Endothelial cell of umbilical vein (primary cell): ENCODE measurements at regions of chr17 and their contacts with region 1.

Region 1: DNA sequence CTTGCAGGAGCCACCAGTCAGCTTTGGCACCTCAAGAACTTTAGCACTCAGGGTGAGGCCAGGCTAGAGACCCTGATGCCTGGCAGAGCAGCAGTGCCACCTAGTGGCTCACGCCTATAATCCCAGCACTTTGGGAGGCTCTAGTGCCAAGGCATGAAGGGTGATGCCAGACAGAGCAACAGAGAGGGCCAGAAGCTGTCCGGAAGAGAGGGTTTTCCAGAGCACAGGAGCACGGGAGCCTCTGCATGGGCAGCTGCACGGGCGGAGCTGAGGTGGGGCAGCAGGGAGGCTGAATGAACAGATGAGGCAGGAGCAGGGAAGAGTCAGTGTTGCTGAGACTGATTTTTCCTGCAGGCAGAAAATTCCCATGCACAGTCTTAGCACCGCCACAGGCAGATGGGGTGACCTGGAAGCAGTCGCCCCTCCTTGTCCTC is 38.9 kb downstream of the MYH3 start:
- DNase-seq: peak; percentile 46
- H3K4me3 ChIP-seq: no peak overlapping the region
- H3K27ac ChIP-seq: no peak overlapping the region
- H3K4me1 ChIP-seq: no peaks in the 10 kb centered on the region
- H3K27me3 ChIP-seq: no peaks in the 10 kb centered on the region
- CTCF ChIP-seq: peak; percentile 90 to 93
- POLR2A ChIP-seq: no peak

Region 2: DNA sequence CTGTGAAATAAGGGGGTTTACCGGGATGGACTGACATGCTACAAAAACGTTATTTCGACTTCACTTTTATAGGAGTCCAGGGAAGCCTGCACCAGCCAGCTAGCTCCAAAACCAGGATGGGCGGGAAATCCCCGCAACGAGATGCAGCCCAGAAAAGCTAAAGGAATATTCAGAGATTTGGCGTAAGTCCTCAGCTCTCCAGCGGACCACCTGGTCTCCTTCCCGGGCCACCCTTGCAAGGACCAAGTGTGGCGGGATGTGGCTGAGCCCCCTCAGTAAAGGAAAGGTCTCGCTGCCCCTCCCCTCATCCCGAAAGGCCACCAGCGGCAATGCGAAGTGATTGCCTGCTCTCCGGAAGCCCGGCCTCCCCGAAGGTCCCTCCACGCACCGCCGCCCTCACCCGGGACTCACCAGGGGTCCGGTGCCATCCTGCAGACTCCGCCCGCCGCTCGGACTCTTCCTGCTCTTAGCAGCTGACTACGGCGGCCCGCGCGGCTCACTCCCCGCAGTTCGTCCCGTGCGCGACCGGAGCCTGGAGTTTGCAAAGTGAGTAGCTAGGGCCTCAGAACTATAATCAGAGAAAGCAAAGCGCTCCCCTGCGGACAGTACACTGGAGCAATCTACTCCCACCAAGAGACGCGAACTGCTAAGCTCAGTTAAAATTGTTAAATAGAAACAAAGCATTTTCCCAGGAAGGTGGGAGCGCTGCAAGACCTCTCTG is 1042.7 kb before region 1 on chr17 and contains the start of gene STX8:
- CTCF ChIA-PET with region 1: interaction called, 64 read pairs
- POLR2A ChIA-PET with region 1: no interaction called
- dilution Hi-C with region 1: no loop called
- intact Hi-C with region 1: no loop called
- DNase-seq: peak; percentile 90
- H3K4me3 ChIP-seq: peak within 1 kb of the TSS; percentile 59 to 89 (median 76)
- H3K27ac ChIP-seq: peak within 1 kb of the TSS; percentile 8
- H3K4me1 ChIP-seq: peaks cover 19% of the 10 kb centered on the region
- H3K27me3 ChIP-seq: no peaks in the 10 kb centered on the region
- CTCF ChIP-seq: no peak
- POLR2A ChIP-seq: no peak
- total RNA-seq, gene STX8: 67.3 and 68.0 TPM in 2 replicates

Region 3: DNA sequence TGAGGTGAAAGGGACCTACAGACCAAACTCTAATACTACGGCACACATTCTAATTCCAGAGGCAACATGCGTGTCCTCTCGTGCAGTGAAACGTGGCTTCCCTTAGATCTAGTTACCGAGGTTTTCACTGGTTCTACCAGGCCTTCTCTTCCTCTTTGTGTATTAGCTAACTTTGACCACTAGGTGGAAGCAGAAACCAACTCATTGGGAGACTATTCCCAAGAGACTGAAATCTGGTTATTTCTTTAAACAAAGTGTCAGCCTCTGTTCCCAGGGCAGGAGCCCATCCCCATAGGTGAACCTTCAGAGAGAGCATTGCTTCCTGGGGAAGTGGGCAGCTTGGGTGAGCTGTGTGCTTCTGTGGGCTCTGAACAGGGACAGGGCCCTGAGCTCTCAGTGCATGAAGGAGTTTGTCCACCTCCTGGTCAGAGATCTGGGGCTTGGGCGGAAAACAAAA is 693.5 kb before region 1 on chr17:
- CTCF ChIA-PET with region 1: interaction called, 108 read pairs
- POLR2A ChIA-PET with region 1: no interaction called
- dilution Hi-C with region 1: no loop called
- intact Hi-C with region 1: loop called (anchors 1 kb)
- DNase-seq: peak; percentile 39
- H3K4me3 ChIP-seq: no peak overlapping the region
- H3K27ac ChIP-seq: no peak overlapping the region
- H3K4me1 ChIP-seq: no peaks in the 10 kb centered on the region
- H3K27me3 ChIP-seq: no peaks in the 10 kb centered on the region
- CTCF ChIP-seq: peak; percentile 57 to 66
- POLR2A ChIP-seq: no peak

Region 4: GRCh38 chr17:10327640-10328039 is 290.6 kb before region 1 on chr17:
- CTCF ChIA-PET with region 1: interaction called, 27 read pairs
- POLR2A ChIA-PET with region 1: no interaction called
- dilution Hi-C with region 1: no loop called
- intact Hi-C with region 1: loop called (anchors 1 kb)
- DNase-seq: peak; percentile 37
- H3K4me3 ChIP-seq: no peak overlapping the region
- H3K27ac ChIP-seq: no peak overlapping the region
- H3K4me1 ChIP-seq: no peaks in the 10 kb centered on the region
- H3K27me3 ChIP-seq: no peaks in the 10 kb centered on the region
- CTCF ChIP-seq: peak; percentile 75 to 82
- POLR2A ChIP-seq: no peak

Region 5: DNA sequence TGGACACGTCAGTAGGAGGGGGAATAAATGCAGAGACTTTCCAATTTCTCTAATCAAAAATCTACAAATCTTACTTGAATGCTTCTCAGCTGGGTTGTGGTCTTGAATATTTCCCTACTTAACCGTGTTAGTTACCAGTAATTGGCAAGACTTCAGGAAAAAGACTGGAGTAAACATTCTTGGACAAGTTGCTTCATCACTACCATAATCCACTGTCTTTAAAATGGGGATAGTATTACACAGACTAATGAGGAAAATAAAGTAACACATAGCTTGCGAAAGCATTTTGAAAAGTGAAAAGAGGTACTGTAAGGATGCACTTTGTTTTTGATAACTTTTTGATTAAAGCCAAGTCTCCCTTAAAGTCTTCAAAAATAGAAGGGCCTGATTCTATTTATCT is 118.3 kb before region 1 on chr17:
- CTCF ChIA-PET with region 1: no interaction called
- POLR2A ChIA-PET with region 1: no interaction called
- dilution Hi-C with region 1: no loop called
- intact Hi-C with region 1: no loop called
- DNase-seq: no peak
- H3K4me3 ChIP-seq: no peak overlapping the region
- H3K27ac ChIP-seq: no peak overlapping the region
- H3K4me1 ChIP-seq: no peaks in the 10 kb centered on the region
- H3K27me3 ChIP-seq: no peaks in the 10 kb centered on the region
- CTCF ChIP-seq: no peak
- POLR2A ChIP-seq: no peak

Region 6: GRCh38 chr17:10549096-10549842 is 69.0 kb before region 1 on chr17 and contains the start of gene MYH2:
- CTCF ChIA-PET with region 1: no interaction called
- POLR2A ChIA-PET with region 1: no interaction called
- dilution Hi-C with region 1: no loop called
- intact Hi-C with region 1: no loop called
- DNase-seq: no peak
- H3K4me3 ChIP-seq: no peak within 1 kb of the TSS
- H3K27ac ChIP-seq: no peak within 1 kb of the TSS
- H3K4me1 ChIP-seq: no peaks in the 10 kb centered on the region
- H3K27me3 ChIP-seq: no peaks in the 10 kb centered on the region
- CTCF ChIP-seq: no peak
- POLR2A ChIP-seq: no peak
- total RNA-seq, gene MYH2: 0.05 TPM in 1 of 2 replicates, not detected in the other

Region 7: GRCh38 chr17:10631048-10631700 is 13.0 kb after region 1 on chr17:
- CTCF ChIA-PET with region 1: interaction called, 44 read pairs
- POLR2A ChIA-PET with region 1: no interaction called
- dilution Hi-C with region 1: no loop called
- intact Hi-C with region 1: no loop called
- DNase-seq: peak; percentile 26
- H3K4me3 ChIP-seq: no peak overlapping the region
- H3K27ac ChIP-seq: no peak overlapping the region
- H3K4me1 ChIP-seq: no peaks in the 10 kb centered on the region
- H3K27me3 ChIP-seq: no peaks in the 10 kb centered on the region
- CTCF ChIP-seq: peak; percentile 85 to 87
- POLR2A ChIP-seq: no peak

Region 8: GRCh38 chr17:10646392-10646990 is 28.3 kb after region 1 on chr17:
- CTCF ChIA-PET with region 1: interaction called, 33 read pairs
- POLR2A ChIA-PET with region 1: no interaction called
- dilution Hi-C with region 1: no loop called
- intact Hi-C with region 1: no loop called
- DNase-seq: peak; percentile 64
- H3K4me3 ChIP-seq: no peak overlapping the region
- H3K27ac ChIP-seq: no peak overlapping the region
- H3K4me1 ChIP-seq: no peaks in the 10 kb centered on the region
- H3K27me3 ChIP-seq: no peaks in the 10 kb centered on the region
- CTCF ChIP-seq: peak; percentile 77 to 86
- POLR2A ChIP-seq: no peak